ENCODE measurements at regions of chr2 and their contacts with region 1.

Region 1: GRCh38 chr2:191611614-191612013 is 66.3 kb upstream of the NABP1 start:
- H3K4me3 Mint-ChIP-seq: peak overlapping the region; percentile 45
- H3K27ac Mint-ChIP-seq: peak overlapping the region; percentile 91
- H3K4me1 Mint-ChIP-seq: peaks cover 16% of the 10 kb centered on the region
- H3K27me3 Mint-ChIP-seq: no peaks in the 10 kb centered on the region

Region 2: DNA sequence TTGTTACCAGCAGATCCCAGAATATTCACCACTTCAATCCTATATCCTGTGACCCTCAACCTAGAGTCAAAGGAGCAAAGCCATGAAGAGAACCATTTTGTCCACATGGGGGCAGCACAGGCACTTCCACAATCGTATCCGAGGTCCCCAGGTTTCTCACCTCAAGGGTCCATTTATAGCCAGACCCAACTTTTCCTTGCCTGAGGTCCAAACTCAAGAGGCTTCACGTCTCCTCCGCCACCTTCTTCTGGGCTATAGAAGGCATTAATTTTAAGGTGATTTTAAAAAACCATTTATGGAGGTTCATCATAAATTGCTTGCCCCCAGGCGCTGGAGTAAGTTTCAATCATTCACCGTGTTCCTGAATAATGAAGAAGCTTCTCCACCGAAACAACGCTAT is 45.3 kb before region 1 on chr2:
- intact Hi-C with region 1: loop called (anchors 2 kb)
- H3K4me3 Mint-ChIP-seq: no peak overlapping the region
- H3K27ac Mint-ChIP-seq: no peak overlapping the region
- H3K4me1 Mint-ChIP-seq: peaks cover 34% of the 10 kb centered on the region
- H3K27me3 Mint-ChIP-seq: peaks cover 5% of the 10 kb centered on the region

Region 3: DNA sequence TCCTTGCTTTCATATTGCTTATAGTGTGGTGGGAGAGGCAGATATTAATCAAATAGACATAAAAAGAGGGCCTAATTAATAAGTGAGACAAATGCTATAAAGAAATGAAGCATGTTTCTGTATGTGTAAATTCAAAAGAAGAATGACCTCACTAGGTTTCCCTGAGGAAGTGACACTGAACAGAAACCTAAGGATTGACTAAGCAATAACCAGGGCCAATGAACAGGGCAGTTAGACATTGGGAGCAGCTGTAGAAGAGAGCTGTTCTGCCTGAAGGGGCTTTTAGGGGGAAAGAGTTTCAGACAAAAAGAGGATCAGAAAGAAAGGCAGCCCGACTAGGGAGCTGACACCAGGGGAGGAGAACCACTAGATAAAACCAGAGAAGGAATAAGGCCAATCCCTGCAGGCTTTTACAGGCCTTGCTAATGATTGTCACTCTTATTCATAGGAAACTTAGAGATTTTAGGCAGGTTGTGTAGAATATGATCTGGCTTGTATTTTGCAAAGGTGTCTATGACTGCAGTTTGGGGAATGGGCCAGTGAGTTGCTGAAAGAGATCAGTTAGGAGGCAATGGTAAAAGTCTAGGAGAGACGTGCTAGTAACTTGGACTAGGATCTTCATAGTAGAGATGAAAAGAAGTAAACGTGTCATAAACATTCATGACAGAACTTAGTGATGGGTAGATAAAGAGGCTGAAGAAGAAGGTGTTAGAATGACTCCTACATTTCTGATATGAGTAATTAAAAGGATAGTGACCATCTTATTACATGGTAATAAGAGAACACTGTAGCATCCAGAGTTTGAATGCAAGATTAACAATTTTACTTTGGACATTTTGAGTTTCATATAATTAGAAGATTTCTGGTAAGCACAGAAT is 39.5 kb after region 1 on chr2:
- intact Hi-C with region 1: loop called (anchors 5 kb)
- H3K4me3 Mint-ChIP-seq: no peak overlapping the region
- H3K27ac Mint-ChIP-seq: peak overlapping the region; percentile 90
- H3K4me1 Mint-ChIP-seq: peaks cover 43% of the 10 kb centered on the region
- H3K27me3 Mint-ChIP-seq: no peaks in the 10 kb centered on the region